ENCODE measurements at regions of chrX and their contacts with region 1.

Region 1: DNA sequence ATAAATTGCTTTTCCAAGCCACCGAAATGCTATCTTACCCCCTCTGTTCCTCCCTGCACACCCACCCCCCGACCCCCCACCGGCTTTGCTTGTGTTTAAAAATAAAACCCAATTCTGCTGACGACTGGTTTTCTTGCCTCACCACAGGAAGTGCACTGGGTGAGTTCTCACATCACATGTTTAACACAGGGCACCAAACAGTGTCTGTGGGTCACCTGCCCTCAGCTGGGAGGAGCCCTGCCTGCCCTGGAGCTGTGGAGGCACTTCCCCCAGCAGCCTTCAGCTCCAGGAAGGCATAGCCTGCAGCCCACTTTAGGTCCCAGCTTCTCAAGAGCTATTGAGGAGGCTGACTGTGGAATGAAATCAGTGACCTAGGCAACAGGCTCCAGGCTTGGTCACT is 8.8 kb downstream of the TMEM255A start:
- DNase-seq: no peak
- ATAC-seq: no peak
- H3K4me3 ChIP-seq: no peak overlapping the region
- H3K27ac ChIP-seq: no peak overlapping the region
- H3K4me1 ChIP-seq: peaks cover 0 to 11% of the 10 kb centered on the region in 2 experiments; a peak in 3 of 5 replicates
- H3K27me3 ChIP-seq: no peaks in the 10 kb centered on the region
- CTCF ChIP-seq: no peak
- EP300 ChIP-seq: no peak
- POLR2A ChIP-seq: no peak
- RAD21 ChIP-seq: no peak

Region 2: DNA sequence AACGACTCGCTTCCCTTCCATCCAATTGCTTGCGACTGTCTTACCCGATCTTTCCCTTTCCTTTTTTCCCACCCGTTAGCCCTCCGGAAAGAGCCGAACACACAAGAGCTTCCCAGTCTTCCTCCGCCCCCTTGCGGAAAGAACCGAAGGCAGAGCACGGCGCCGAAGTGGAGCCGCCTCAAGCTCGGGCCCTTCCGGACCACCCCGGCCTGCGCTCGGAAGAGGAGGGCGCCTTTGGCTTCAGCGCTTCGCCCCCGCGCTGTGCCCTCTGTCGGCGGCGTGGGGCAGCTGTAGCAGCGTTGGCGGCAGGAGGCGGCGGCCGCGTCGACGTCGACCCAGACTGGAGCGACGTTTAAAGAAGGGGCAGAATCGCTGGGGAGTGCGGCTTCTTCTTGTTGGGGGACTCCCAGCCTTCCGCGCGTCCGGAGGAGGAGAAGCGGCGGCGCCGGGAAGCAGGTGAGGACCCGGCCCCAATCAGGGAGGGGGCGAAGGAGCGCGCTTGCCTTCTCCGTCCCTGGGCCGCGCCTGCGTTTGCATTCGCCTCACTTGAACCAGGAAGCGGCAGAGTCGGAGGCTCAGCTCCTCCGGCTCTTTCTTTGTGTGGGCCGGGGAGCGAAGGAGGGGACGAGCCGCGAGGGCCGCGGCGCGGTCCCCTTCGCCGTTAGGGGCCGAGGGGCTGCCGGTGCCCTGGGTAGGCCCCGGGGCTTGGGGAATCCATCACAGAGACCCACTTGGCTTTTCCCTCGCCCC is 51.7 kb before region 1 on chrX and contains the start of gene ZBTB33:
- CTCF ChIA-PET with region 1: no interaction called
- POLR2A ChIA-PET with region 1: no interaction called
- in situ Hi-C with region 1: no loop called
- intact Hi-C with region 1: loop called (anchors 5 kb)
- DNase-seq: peak; percentile 88 to 96 (median 92)
- ATAC-seq: peak; percentile 99
- H3K4me3 ChIP-seq: peak within 1 kb of the TSS; percentile 77
- H3K27ac ChIP-seq: peak within 1 kb of the TSS; percentile 91
- H3K4me1 ChIP-seq: peaks cover 5 to 6% of the 10 kb centered on the region in 2 experiments; a peak in 2 of 5 replicates
- H3K27me3 ChIP-seq: no peaks in the 10 kb centered on the region
- CTCF ChIP-seq: peak; percentile 64 to 70 (median 67)
- EP300 ChIP-seq: no peak
- POLR2A ChIP-seq: peak; percentile 74
- RAD21 ChIP-seq: peak in 1 of 2 experiments; percentile 36; a peak in 2 of 4 replicates
- polyA plus RNA-seq, gene ZBTB33: 5.6 to 9.1 TPM